PC-9 (cell line): ENCODE measurements at regions of chr3 and their contacts with region 1.

Region 1: GRCh38 chr3:18389108-18389733 is 35.9 kb downstream of the SATB1 start:
- DNase-seq: peak in 1 of 2 experiments; percentile 7
- H3K4me3 ChIP-seq: no peak overlapping the region
- H3K27ac ChIP-seq: no peak overlapping the region
- H3K4me1 ChIP-seq: no peaks in the 10 kb centered on the region
- H3K27me3 ChIP-seq: no peaks in the 10 kb centered on the region
- CTCF ChIP-seq: peak; percentile 83

Region 2: DNA sequence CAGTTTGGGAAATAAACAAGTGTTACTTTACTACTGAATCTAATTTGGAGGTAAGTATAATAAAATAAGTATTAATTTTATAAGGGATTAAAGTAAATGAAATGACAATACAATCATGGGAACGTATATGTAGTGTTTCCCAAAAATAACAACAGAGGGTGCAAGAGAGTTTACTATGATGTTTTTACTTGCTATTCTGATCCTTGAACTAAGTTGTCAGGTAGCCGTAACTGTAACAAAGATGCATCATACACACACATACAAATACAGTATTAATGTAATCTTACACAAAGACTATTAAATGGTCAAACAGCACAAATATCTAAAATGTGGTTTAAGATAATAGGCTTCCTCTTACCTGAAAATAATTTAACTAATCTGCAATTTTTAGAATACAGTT is 958.2 kb before region 1 on chr3:
- CTCF ChIA-PET with region 1: no interaction called
- POLR2A ChIA-PET with region 1: no interaction called
- intact Hi-C with region 1: loop called (anchors 5 kb)
- DNase-seq: no peak
- H3K4me3 ChIP-seq: no peak overlapping the region
- H3K27ac ChIP-seq: no peak overlapping the region
- H3K4me1 ChIP-seq: peaks cover 13% of the 10 kb centered on the region
- H3K27me3 ChIP-seq: no peaks in the 10 kb centered on the region
- CTCF ChIP-seq: peak; percentile 70

Region 3: GRCh38 chr3:17894434-17895060 is 494.7 kb before region 1 on chr3:
- CTCF ChIA-PET with region 1: no interaction called
- POLR2A ChIA-PET with region 1: no interaction called
- intact Hi-C with region 1: loop called (anchors 2 kb)
- DNase-seq: peak in 1 of 2 experiments; percentile 42
- H3K4me3 ChIP-seq: no peak overlapping the region
- H3K27ac ChIP-seq: no peak overlapping the region
- H3K4me1 ChIP-seq: no peaks in the 10 kb centered on the region
- H3K27me3 ChIP-seq: no peaks in the 10 kb centered on the region
- CTCF ChIP-seq: peak; percentile 70

Region 4: DNA sequence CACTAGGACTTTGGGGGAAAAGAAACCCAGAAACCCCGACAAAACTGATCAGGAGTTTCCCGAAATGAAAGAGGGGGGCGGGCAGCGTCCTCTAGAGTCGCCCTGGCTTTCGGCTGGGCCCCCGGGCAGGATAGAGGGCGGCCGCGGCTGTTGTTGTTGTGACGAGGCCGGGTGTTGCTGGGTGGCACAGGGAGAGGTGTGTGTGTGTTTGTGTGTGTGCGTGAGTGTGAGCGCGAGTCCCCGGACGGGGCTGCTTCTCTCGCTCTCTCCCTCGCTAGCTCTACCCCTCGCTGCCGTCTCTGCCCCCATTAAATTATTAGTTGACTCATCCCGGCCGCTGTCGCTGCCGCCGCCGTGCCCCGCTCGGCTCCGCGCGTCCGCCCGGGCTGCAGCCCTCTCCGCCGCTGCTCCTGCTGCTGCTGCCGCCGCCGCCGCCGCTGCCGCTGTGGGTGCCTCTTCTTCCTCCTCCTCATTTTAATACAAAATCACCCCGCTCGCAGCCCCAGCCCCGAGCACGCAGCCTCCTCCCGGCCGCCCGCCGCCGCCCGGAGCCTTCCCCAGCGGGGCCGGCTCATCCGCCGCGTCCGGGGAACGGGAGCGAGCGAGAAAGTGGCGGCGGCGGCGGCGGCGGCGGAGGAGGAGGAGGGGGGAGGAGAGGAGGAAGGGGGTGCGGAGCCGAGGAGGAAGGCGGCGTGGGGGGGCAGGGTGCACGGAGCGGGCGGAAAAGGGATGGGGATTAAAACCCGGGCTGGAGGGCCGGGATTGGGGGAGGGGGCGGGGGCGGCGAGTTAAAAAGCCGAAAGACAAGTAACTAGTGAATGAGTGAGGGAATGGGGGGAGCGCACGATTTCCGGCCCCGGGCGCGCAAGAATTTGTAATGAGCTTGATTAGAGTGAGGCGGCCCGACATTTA is 35.8 kb after region 1 on chr3 and contains the start of gene SATB1:
- CTCF ChIA-PET with region 1: no interaction called
- POLR2A ChIA-PET with region 1: interaction called, 12 read pairs
- intact Hi-C with region 1: no loop called
- DNase-seq: peak in 1 of 2 experiments; percentile 69
- H3K4me3 ChIP-seq: peak within 1 kb of the TSS; percentile 86
- H3K27ac ChIP-seq: peak within 1 kb of the TSS; percentile 50
- H3K4me1 ChIP-seq: peaks cover 26% of the 10 kb centered on the region
- H3K27me3 ChIP-seq: no peaks in the 10 kb centered on the region
- CTCF ChIP-seq: no peak
- total RNA-seq, gene SATB1: 25.4 and 28.7 TPM in 2 replicates